ENCODE measurements at regions of chr14 and their contacts with region 1.

Region 1: DNA sequence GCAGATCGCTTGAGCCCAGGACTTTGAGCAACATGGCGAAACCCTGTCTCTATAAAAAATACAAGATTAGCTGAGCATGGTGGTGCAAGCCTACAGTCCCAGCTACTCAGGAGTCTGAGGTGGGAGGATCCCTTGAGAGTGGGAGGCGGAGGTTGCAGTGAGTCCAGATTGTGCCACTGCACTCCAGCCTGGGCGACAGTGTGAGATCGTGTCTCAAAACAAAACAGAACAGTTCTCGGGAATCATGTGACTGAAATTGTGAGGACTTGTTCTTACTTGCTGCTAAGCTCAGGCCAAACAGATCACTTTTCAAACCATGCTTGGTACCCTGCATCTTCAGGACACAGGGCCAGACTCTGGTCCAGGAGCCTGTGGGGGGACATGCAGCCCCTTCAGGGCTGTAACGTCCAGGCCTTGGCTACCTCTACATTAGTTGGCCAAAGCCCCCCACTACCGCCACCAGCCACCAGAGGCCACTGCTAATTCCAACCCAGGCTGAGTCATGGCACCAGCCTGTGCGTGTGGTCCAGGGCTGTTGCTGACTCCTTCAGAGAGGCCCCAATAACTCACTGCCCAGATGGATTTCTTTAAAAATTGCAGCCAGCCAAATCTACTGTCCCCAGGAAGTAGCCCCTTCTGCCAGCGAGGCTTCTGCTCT is 33.4 kb upstream of the SYNDIG1L start:
- DNase-seq: peak; percentile 33 to 84
- H3K4me3 ChIP-seq: no peak overlapping the region
- H3K27ac ChIP-seq: no peak overlapping the region
- H3K4me1 ChIP-seq: peaks cover 0 to 3% (median 2%) of the 10 kb centered on the region in 4 experiments; a peak in 5 of 7 replicates
- H3K27me3 ChIP-seq: no peaks in the 10 kb centered on the region
- CTCF ChIP-seq: peak; percentile 68 to 89 (median 87)
- EP300 ChIP-seq: no peak
- POLR2A ChIP-seq: no peak
- RAD21 ChIP-seq: peak; percentile 38 to 69; a peak in 3 of 4 replicates

Region 2: GRCh38 chr14:74296037-74296467 is 163.4 kb before region 1 on chr14:
- CTCF ChIA-PET with region 1: interaction called, 22 read pairs
- POLR2A ChIA-PET with region 1: no interaction called
- DNase-seq: no peak
- H3K4me3 ChIP-seq: no peak overlapping the region
- H3K27ac ChIP-seq: no peak overlapping the region
- H3K4me1 ChIP-seq: 0 out of 7 replicates have a peak, but pooled peaks cover 0 to 2% (median 0%) of the 10 kb centered on the region in 4 experiments
- H3K27me3 ChIP-seq: no peaks in the 10 kb centered on the region
- CTCF ChIP-seq: no peak
- EP300 ChIP-seq: no peak
- POLR2A ChIP-seq: no peak
- RAD21 ChIP-seq: no peak

Region 3: GRCh38 chr14:74362361-74362915 is 97.0 kb before region 1 on chr14:
- CTCF ChIA-PET with region 1: interaction called, 22 read pairs
- POLR2A ChIA-PET with region 1: interaction called, 5 read pairs
- DNase-seq: peak; percentile 77 to 96
- H3K4me3 ChIP-seq: no peak overlapping the region
- H3K27ac ChIP-seq: no peak overlapping the region
- H3K4me1 ChIP-seq: peaks cover 11 to 31% (median 14%) of the 10 kb centered on the region in 4 experiments
- H3K27me3 ChIP-seq: no peaks in the 10 kb centered on the region
- CTCF ChIP-seq: peak; percentile 85 to 99 (median 92)
- EP300 ChIP-seq: no peak; a peak in 1 of 3 replicates
- POLR2A ChIP-seq: peak in 1 of 2 experiments; percentile 40; a peak in 1 of 3 replicates
- RAD21 ChIP-seq: peak; percentile 96 to 97

Region 4: DNA sequence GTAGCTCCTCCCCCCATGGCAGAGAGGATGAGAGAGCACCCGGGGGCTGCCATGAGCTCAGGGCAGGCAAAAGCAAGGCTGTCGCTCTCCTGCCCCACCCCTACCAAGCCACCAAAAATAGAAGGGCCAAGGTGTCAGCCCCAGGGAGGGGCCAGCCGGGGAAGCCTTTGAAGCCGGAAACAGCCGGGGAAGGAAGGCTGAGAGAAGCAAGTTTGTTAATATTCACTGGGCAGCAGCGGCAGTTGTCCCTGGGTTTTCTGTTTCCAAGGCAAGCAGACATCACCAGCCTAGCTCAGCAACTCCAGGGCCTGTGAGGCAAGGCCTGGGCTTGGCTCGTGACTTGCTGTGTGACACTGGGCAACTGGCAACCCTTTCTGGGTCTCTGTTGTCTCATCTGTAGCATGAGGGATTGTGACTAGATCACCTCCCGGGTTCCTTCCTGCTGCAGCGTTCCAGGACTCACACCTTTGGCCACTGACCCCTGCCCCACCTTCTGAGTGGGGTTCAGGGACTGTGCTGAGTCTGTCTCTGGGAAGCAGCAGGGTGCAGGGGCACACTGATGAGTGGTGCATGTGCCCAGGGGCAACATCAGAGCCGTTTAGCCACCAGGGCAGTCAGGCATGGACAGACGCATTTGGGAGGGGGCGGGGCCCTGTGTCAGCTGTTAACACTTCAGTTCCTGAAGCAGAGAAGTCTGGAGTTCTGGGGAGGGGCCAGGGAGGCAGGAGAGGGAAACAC is 57.7 kb before region 1 on chr14:
- CTCF ChIA-PET with region 1: interaction called, 29 read pairs
- POLR2A ChIA-PET with region 1: no interaction called
- DNase-seq: peak in 1 of 2 experiments; percentile 76
- H3K4me3 ChIP-seq: no peak overlapping the region
- H3K27ac ChIP-seq: no peak overlapping the region
- H3K4me1 ChIP-seq: peaks cover 3 to 34% (median 25%) of the 10 kb centered on the region in 4 experiments
- H3K27me3 ChIP-seq: no peaks in the 10 kb centered on the region
- CTCF ChIP-seq: no peak
- EP300 ChIP-seq: no peak
- POLR2A ChIP-seq: no peak
- RAD21 ChIP-seq: no peak

Region 5: GRCh38 chr14:74425525-74426201 is 33.8 kb before region 1 on chr14:
- CTCF ChIA-PET with region 1: interaction called, 25 read pairs
- POLR2A ChIA-PET with region 1: interaction called, 4 read pairs
- DNase-seq: peak in 1 of 2 experiments; percentile 94
- H3K4me3 ChIP-seq: peak overlapping the region; percentile 34 to 60 (median 51)
- H3K27ac ChIP-seq: no peak overlapping the region
- H3K4me1 ChIP-seq: peaks cover 27 to 39% (median 30%) of the 10 kb centered on the region in 4 experiments
- H3K27me3 ChIP-seq: peaks cover 0 to 12% (median 7%) of the 10 kb centered on the region in 4 experiments; a peak in 4 of 7 replicates
- CTCF ChIP-seq: no peak
- EP300 ChIP-seq: peak in 1 of 2 experiments; percentile 70; a peak in 1 of 3 replicates
- POLR2A ChIP-seq: no peak
- RAD21 ChIP-seq: no peak

Region 6: GRCh38 chr14:74444866-74445265 is 14.6 kb before region 1 on chr14:
- CTCF ChIA-PET with region 1: interaction called, 13 read pairs
- POLR2A ChIA-PET with region 1: interaction called, 4 read pairs
- DNase-seq: no peak
- H3K4me3 ChIP-seq: no peak overlapping the region
- H3K27ac ChIP-seq: no peak overlapping the region
- H3K4me1 ChIP-seq: peaks cover 0 to 9% (median 1%) of the 10 kb centered on the region in 4 experiments; a peak in 2 of 7 replicates
- H3K27me3 ChIP-seq: no peaks in the 10 kb centered on the region
- CTCF ChIP-seq: no peak
- EP300 ChIP-seq: no peak
- POLR2A ChIP-seq: no peak
- RAD21 ChIP-seq: no peak

Measured in H1 (cell line).